Activated CD8-positive, alpha-beta T cell treated with anti-CD3 and anti-CD28 coated beads for 36 hours (primary cell): ENCODE measurements at regions of chr3 and their contacts with region 1.

Region 1: GRCh38 chr3:38346587-38347410 is at the start of gene XYLB:
- DNase-seq: peak; percentile 85
- ATAC-seq: peak; percentile 98
- H3K4me3 Mint-ChIP-seq: peak within 1 kb of the TSS; percentile 72
- H3K27ac Mint-ChIP-seq: peak within 1 kb of the TSS; percentile 51
- H3K4me1 Mint-ChIP-seq: peaks cover 4% of the 10 kb centered on the region
- H3K27me3 Mint-ChIP-seq: no peaks in the 10 kb centered on the region
- CTCF ChIP-seq: peak; percentile 76
- total RNA-seq, gene XYLB: 4.4 to 4.7 TPM

Region 2: DNA sequence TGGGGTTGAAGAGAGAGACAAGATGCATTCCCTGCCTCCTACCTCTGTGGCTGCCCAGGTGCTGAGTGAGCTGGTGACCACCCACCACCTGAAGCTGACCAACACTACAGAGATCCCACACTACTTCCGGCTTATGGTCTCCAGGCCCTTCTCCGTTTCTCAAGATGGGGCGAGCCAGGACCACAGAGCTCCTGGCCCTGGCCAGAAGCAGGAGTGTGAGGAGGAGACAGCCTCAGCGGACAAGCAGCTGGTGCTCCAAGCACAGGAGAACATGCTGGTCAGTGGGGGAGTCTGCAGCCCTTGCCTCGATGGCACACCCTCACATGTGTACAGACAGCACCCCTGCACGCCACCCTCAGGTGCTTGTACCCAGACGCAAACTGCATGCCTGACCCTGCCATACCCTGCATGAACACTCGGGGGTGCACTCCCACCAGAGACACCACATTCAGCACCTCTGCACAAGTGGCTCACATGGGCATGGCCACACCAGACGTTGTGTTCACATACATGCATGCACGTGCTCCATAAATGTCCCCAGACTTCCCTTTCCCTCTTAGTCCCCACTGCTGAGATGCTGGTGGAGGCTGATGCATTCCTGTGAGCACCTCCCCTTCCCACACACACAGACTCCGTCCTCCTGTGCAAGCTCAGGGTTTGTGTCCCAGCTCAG is 228.9 kb before region 1 on chr3:
- CTCF ChIA-PET with region 1: interaction called, 13 read pairs
- POLR2A ChIA-PET with region 1: no interaction called
- intact Hi-C with region 1: no loop called
- DNase-seq: peak; percentile 87
- ATAC-seq: peak; percentile 97
- H3K4me3 Mint-ChIP-seq: no peak overlapping the region
- H3K27ac Mint-ChIP-seq: no peak overlapping the region
- H3K4me1 Mint-ChIP-seq: peaks cover 7% of the 10 kb centered on the region
- H3K27me3 Mint-ChIP-seq: no peaks in the 10 kb centered on the region
- CTCF ChIP-seq: peak; percentile 86

Region 3: DNA sequence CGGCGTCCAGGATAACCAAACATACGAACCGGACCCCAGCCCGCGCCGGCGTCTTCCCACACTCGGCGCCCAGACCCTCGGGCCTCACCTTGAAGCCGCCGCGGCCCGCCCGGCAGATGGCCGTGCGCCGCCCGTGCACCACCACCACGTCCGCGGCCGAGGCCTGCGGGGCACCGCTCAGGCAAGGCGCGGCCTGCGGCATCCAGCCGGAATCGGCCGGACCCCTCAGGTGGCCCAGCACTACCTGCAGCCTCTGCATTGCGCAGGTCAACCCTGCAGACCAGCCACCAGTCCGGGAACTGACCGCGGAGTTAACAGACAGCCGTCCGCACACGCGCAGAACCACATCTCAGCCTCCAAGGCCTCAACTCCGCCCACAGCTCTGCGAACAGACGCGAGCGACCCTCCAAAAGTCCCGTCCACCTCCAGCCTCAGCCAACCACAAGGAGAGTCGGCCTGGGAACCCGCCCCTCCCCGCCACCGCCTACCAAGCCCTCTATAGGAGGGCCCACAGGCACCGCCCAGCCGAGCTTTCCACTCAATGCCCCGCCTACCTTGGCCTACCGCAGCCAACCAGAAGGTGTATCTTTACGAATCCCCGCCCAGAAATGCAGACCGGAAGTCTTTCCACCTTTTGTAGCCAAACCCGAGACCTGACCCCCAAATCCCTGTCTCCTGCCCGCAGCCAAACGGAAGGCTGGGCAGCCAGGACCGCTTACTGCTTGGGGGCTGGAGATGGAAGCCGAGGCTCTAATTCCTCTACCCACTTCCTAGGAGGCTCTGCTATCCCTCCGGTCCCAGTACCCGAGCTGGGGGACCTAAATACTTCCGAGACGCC is 209.8 kb before region 1 on chr3 and contains the start of gene ACAA1:
- CTCF ChIA-PET with region 1: interaction called, 10 read pairs
- POLR2A ChIA-PET with region 1: interaction called, 6 read pairs
- intact Hi-C with region 1: loop called (anchors 10 kb)
- DNase-seq: peak; percentile 100
- ATAC-seq: peak; percentile 92
- H3K4me3 Mint-ChIP-seq: peak within 1 kb of the TSS; percentile 92
- H3K27ac Mint-ChIP-seq: peak within 1 kb of the TSS; percentile 98
- H3K4me1 Mint-ChIP-seq: peaks cover 59% of the 10 kb centered on the region
- H3K27me3 Mint-ChIP-seq: no peaks in the 10 kb centered on the region
- CTCF ChIP-seq: no peak
- total RNA-seq, gene ACAA1: 70.1 to 72.0 TPM

Region 4: GRCh38 chr3:38307599-38307998 is 39.2 kb before region 1 on chr3:
- CTCF ChIA-PET with region 1: no interaction called
- POLR2A ChIA-PET with region 1: no interaction called
- intact Hi-C with region 1: no loop called
- DNase-seq: no peak
- ATAC-seq: no peak
- H3K4me3 Mint-ChIP-seq: no peak overlapping the region
- H3K27ac Mint-ChIP-seq: no peak overlapping the region
- H3K4me1 Mint-ChIP-seq: no peaks in the 10 kb centered on the region
- H3K27me3 Mint-ChIP-seq: no peaks in the 10 kb centered on the region
- CTCF ChIP-seq: no peak

Region 5: DNA sequence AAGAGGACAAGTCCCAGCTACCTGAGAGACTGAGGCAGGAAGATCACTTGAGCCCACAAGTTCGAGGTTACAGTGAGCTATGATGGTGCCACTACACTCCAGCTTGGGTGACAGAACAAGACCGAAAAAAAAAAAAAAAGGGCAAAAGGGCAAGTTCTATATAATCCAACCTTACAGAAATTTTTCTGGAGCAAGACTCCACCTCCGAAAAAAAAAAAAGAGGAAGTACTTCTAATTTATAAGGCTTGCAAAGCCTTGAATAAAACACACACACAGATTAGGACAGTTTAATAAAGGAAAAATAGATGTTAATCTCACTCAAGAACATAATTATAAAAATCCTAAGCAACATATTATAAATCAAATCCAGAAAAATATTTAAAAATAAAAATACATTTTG is 14.6 kb before region 1 on chr3:
- CTCF ChIA-PET with region 1: interaction called, 10 read pairs
- POLR2A ChIA-PET with region 1: interaction called, 3 read pairs
- intact Hi-C with region 1: no loop called
- DNase-seq: no peak
- ATAC-seq: no peak
- H3K4me3 Mint-ChIP-seq: no peak overlapping the region
- H3K27ac Mint-ChIP-seq: no peak overlapping the region
- H3K4me1 Mint-ChIP-seq: peaks cover 5% of the 10 kb centered on the region
- H3K27me3 Mint-ChIP-seq: peaks cover 3% of the 10 kb centered on the region
- CTCF ChIP-seq: no peak

Region 6: DNA sequence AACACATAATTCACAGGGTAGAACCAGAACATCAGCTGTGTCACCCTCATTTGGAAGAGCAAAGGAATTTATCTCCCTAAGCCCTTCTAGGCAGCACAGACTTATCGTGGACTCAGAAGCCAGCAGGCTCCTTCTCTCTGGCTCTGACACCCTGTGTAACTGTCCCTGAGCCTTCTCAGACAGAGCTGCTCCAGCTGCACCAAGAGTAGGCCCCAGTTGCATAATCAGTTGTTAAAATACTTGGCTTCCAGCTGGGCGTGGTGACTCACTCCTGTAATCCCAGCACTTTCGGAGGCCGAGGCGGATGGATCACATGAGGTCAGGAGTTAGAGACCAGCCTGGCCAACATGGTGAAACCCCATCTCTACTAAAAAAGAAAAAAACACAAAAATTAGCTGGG is 57.5 kb after region 1 on chr3:
- CTCF ChIA-PET with region 1: no interaction called
- POLR2A ChIA-PET with region 1: no interaction called
- intact Hi-C with region 1: no loop called
- DNase-seq: no peak
- ATAC-seq: no peak
- H3K4me3 Mint-ChIP-seq: no peak overlapping the region
- H3K27ac Mint-ChIP-seq: no peak overlapping the region
- H3K4me1 Mint-ChIP-seq: no peaks in the 10 kb centered on the region
- H3K27me3 Mint-ChIP-seq: no peaks in the 10 kb centered on the region
- CTCF ChIP-seq: no peak

Region 7: GRCh38 chr3:38479431-38480092 is 132.8 kb after region 1 on chr3:
- CTCF ChIA-PET with region 1: interaction called, 49 read pairs
- POLR2A ChIA-PET with region 1: interaction called, 6 read pairs
- intact Hi-C with region 1: loop called (anchors 5 kb)
- DNase-seq: peak; percentile 59
- ATAC-seq: peak; percentile 75
- H3K4me3 Mint-ChIP-seq: no peak overlapping the region
- H3K27ac Mint-ChIP-seq: no peak overlapping the region
- H3K4me1 Mint-ChIP-seq: no peaks in the 10 kb centered on the region
- H3K27me3 Mint-ChIP-seq: no peaks in the 10 kb centered on the region
- CTCF ChIP-seq: peak; percentile 81

Region 8: GRCh38 chr3:38496131-38496910 is 149.5 kb after region 1 on chr3 and contains the start of gene EXOG:
- CTCF ChIA-PET with region 1: interaction called, 11 read pairs
- POLR2A ChIA-PET with region 1: interaction called, 4 read pairs
- intact Hi-C with region 1: no loop called
- DNase-seq: peak; percentile 93
- ATAC-seq: peak; percentile 95
- H3K4me3 Mint-ChIP-seq: peak within 1 kb of the TSS; percentile 99
- H3K27ac Mint-ChIP-seq: peak within 1 kb of the TSS; percentile 95
- H3K4me1 Mint-ChIP-seq: peaks cover 18% of the 10 kb centered on the region
- H3K27me3 Mint-ChIP-seq: no peaks in the 10 kb centered on the region
- CTCF ChIP-seq: peak; percentile 84
- total RNA-seq, gene EXOG: 16.8 to 17.7 TPM

Region 9: GRCh38 chr3:38521391-38521987 is 174.7 kb after region 1 on chr3:
- CTCF ChIA-PET with region 1: interaction called, 10 read pairs
- POLR2A ChIA-PET with region 1: no interaction called
- intact Hi-C with region 1: no loop called
- DNase-seq: peak; percentile 78
- ATAC-seq: peak; percentile 85
- H3K4me3 Mint-ChIP-seq: no peak overlapping the region
- H3K27ac Mint-ChIP-seq: no peak overlapping the region
- H3K4me1 Mint-ChIP-seq: peaks cover 22% of the 10 kb centered on the region
- H3K27me3 Mint-ChIP-seq: no peaks in the 10 kb centered on the region
- CTCF ChIP-seq: peak; percentile 93